Dendritic cell treated with granulocyte-macrophage colony-stimulating factor and Interleukin-4, amounts not matched to agents 40 ng/mL and 50 ng/mL, for 4 days (primary cell): ENCODE measurements at regions of chr2 and their contacts with region 1.

Region 1: DNA sequence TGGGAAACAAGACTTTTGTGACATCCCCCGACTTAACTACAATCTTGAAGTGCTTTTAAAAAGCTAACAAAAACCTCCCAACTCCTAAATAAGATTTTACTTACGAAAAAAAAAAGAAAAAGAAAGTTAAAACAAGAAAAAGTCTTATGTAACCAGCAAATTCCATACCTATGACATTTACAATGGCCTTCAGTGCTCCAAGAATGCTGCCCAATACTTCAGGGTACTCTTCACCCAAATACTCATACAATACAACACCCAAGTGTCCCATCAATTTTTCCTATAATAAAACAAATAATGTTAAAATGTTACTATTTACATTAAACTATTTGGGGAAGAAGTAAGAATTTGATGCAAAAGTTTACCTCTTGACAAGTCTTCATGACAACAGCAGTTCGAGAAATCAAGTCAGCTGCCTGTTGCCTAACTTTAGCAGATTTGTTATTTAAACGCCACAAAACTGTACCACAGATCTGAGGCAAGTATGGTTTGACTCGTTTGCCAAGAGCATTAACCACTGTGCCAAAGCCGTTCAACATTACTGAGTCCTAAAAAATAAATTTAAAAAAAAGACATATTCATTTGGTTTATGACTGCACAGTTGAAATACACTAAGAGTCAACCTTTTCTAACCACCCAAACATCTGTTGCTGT is 34.8 kb downstream of the SF3B1 start:
- H3K4me3 Mint-ChIP-seq: no peak overlapping the region
- H3K27ac Mint-ChIP-seq: no peak overlapping the region
- H3K4me1 Mint-ChIP-seq: no peaks in the 10 kb centered on the region
- H3K27me3 Mint-ChIP-seq: no peaks in the 10 kb centered on the region

Region 2: DNA sequence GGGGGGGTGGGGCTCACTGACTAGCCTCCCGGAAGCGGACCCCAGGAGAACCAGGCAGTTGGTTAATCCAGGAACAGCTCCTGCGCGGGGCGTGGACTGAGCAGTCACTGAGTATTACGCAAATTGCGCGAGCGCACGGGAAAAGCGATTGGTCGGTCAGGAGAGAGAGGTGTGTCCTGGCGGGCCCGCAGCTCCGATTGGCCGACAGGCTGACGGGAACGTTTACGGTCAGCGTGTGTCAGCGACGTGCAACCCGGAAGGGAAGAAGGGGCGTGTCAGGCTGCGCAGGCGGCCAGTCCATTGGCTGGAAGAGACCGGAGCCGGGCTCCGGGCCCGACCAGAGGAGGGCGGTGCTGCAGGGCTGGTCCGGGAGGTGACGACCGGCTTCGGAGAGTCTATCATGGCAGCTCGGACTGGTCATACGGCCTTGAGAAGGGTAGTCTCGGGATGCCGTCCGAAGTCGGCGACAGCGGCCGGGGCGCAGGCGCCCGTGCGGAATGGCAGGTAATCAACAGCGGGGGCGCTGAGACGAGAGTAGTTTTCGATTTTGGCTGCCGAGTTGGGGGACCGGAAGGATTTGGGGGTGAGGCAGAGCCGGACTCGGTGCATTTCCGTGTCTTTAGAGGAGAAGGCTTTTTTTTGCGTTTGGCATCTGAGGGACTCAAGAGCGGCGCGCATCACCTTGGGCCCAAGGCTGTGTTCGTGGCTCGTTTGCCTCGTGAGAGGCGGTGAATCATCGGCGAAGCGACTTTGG is 53.3 kb after region 1 on chr2 and contains the start of gene COQ10B:
- intact Hi-C with region 1: no loop called
- H3K4me3 Mint-ChIP-seq: peak within 1 kb of the TSS; percentile 96
- H3K27ac Mint-ChIP-seq: peak within 1 kb of the TSS; percentile 96
- H3K4me1 Mint-ChIP-seq: peaks cover 41% of the 10 kb centered on the region
- H3K27me3 Mint-ChIP-seq: no peaks in the 10 kb centered on the region

Region 3: DNA sequence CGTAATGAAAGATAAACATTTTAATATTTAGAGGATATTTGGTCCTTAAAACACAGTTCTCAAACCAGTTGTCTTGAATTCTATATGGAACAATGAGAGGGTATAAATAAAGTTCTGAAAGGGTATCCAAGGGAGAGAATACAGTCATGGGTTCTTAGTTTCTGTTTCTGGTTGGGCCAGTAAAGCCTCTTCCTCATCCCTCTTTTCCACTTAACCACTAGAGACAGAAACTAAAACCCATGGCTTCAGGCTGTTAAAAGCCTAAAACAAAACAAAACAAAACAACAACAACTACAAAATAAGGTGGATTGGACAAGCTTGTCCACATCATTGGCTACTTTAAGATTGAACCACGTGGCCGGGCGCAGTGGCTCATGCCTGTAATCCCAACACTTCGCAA is 72.2 kb after region 1 on chr2:
- intact Hi-C with region 1: loop called (anchors 5 kb)
- H3K4me3 Mint-ChIP-seq: no peak overlapping the region
- H3K27ac Mint-ChIP-seq: no peak overlapping the region
- H3K4me1 Mint-ChIP-seq: no peaks in the 10 kb centered on the region
- H3K27me3 Mint-ChIP-seq: no peaks in the 10 kb centered on the region